Caco-2 (cell line): ENCODE measurements at regions of chr15 and their contacts with region 1.

Region 1: DNA sequence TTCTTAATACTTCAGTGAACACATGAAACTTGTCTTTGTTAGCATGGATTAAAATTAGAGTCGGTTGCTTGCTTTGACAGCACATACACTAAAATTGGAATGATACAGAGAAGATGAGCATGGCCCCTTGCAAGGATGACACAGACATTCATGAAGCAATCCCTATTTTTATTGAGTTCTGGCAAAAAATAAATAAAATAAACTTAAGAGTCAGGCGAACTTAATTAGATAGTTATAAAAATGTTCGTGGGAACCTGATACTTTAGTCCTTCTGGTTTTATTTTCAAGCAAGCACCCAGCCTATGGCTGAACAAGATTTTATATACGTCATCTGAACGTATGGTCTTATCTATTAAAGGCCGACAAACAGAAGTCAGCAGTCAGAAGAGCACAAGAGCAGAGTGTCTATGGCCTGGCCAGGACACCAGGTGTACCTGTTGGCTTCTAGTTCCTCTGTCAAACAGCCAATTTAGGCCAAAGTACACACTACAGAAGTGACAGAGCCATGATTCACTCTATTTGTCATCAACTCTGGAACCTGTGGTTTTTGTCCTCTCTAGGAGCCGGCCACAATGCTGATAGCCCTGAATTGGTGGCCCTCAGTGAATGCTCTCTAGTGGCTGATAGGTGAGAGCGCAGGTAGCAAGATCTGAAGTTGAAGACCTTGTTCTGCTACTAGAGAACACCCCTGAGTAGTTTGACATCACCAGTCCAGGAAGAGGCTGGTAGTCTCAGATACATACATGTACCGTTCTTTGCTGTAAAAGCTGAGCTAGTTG is 64.3 kb downstream of the LEO1 start:
- DNase-seq: peak; percentile 82 to 85
- H3K4me3 ChIP-seq: no peak overlapping the region
- H3K4me3 Mint-ChIP-seq: no peak overlapping the region
- H3K27ac Mint-ChIP-seq: peak overlapping the region; percentile 54
- H3K4me1 ChIP-seq: peaks cover 19% of the 10 kb centered on the region
- H3K4me1 Mint-ChIP-seq: peaks cover 9% of the 10 kb centered on the region
- H3K27me3 ChIP-seq: no peaks in the 10 kb centered on the region
- H3K27me3 Mint-ChIP-seq: no peaks in the 10 kb centered on the region
- CTCF ChIP-seq: peak; percentile 41 to 66

Region 2: GRCh38 chr15:51649659-51650521 is 257.4 kb before region 1 on chr15:
- CTCF ChIA-PET with region 1: no interaction called
- POLR2A ChIA-PET with region 1: no interaction called
- intact Hi-C with region 1: loop called (anchors 1 kb)
- DNase-seq: peak in 1 of 2 experiments; percentile 64
- H3K4me3 ChIP-seq: no peak overlapping the region
- H3K4me3 Mint-ChIP-seq: no peak overlapping the region
- H3K27ac Mint-ChIP-seq: no peak overlapping the region
- H3K4me1 ChIP-seq: no peaks in the 10 kb centered on the region
- H3K4me1 Mint-ChIP-seq: no peaks in the 10 kb centered on the region
- H3K27me3 ChIP-seq: no peaks in the 10 kb centered on the region
- H3K27me3 Mint-ChIP-seq: peaks cover 4% of the 10 kb centered on the region
- CTCF ChIP-seq: peak; percentile 52 to 70

Region 3: DNA sequence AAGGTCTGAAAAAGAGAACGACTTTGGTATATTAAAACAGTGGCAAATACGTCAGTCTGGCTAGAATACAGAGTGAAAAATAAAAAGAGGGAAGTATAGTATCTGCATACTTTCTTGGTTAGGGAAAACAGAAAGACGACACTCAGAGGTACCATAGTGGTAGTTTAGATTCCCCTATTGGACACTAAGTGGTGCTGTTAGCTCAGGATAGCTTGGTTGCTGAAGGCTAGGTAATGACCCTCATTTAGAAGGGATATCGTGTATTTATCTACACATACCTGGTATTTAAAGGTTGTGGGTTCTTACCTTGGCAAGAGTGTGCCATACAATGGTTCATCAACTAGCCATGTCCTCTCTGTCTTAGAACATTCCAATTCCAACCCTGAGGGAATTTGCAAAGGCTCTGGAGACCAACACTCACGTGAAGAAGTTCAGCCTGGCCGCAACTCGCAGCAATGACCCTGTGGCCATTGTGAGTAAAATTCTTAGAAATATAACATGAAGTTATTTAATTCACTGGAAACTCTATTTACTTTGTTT is 124.9 kb before region 1 on chr15:
- CTCF ChIA-PET with region 1: interaction called, 5 read pairs
- POLR2A ChIA-PET with region 1: no interaction called
- intact Hi-C with region 1: loop called (anchors 1 kb)
- DNase-seq: peak in 1 of 2 experiments; percentile 26
- H3K4me3 ChIP-seq: no peak overlapping the region
- H3K4me3 Mint-ChIP-seq: no peak overlapping the region
- H3K27ac Mint-ChIP-seq: no peak overlapping the region
- H3K4me1 ChIP-seq: no peaks in the 10 kb centered on the region
- H3K4me1 Mint-ChIP-seq: no peaks in the 10 kb centered on the region
- H3K27me3 ChIP-seq: no peaks in the 10 kb centered on the region
- H3K27me3 Mint-ChIP-seq: no peaks in the 10 kb centered on the region
- CTCF ChIP-seq: peak; percentile 28 to 51

Region 4: DNA sequence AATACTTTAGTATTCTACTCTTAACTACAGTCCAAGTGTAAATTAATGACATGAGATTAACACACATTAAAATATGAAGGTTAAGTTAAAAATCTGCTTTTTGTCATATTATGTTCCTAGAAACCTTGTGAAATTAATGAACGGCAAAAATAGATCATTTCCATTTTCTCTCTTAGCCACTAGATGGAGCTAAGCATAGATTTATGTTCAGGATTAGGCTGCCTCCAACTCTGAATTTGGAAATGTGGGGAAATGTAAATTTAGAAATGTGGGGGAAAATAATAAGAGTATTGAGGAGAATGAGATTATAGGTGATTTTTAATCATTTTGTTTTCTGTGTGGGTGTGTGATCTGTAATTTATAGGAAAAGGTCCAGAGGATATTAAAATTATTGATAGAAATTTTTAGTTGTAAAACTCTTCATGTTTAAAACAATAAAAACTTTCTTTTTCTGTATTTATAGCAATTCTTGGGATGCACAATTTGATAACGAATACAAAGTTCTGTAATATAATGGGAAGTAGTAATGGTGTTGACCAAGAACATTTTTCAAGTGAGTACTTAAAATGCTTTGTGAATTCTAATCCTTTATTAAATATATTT is 18.6 kb before region 1 on chr15:
- CTCF ChIA-PET with region 1: interaction called, 5 read pairs
- POLR2A ChIA-PET with region 1: no interaction called
- intact Hi-C with region 1: loop called (anchors 1 kb)
- DNase-seq: no peak
- H3K4me3 ChIP-seq: no peak overlapping the region
- H3K4me3 Mint-ChIP-seq: no peak overlapping the region
- H3K27ac Mint-ChIP-seq: no peak overlapping the region
- H3K4me1 ChIP-seq: peaks cover 8% of the 10 kb centered on the region; the same call in 1 of the 2 replicates
- H3K4me1 Mint-ChIP-seq: no peaks in the 10 kb centered on the region
- H3K27me3 ChIP-seq: no peaks in the 10 kb centered on the region
- H3K27me3 Mint-ChIP-seq: no peaks in the 10 kb centered on the region
- CTCF ChIP-seq: peak; percentile 44 to 69